ENCODE measurements at regions of chr20 and their contacts with region 1.

Region 1: DNA sequence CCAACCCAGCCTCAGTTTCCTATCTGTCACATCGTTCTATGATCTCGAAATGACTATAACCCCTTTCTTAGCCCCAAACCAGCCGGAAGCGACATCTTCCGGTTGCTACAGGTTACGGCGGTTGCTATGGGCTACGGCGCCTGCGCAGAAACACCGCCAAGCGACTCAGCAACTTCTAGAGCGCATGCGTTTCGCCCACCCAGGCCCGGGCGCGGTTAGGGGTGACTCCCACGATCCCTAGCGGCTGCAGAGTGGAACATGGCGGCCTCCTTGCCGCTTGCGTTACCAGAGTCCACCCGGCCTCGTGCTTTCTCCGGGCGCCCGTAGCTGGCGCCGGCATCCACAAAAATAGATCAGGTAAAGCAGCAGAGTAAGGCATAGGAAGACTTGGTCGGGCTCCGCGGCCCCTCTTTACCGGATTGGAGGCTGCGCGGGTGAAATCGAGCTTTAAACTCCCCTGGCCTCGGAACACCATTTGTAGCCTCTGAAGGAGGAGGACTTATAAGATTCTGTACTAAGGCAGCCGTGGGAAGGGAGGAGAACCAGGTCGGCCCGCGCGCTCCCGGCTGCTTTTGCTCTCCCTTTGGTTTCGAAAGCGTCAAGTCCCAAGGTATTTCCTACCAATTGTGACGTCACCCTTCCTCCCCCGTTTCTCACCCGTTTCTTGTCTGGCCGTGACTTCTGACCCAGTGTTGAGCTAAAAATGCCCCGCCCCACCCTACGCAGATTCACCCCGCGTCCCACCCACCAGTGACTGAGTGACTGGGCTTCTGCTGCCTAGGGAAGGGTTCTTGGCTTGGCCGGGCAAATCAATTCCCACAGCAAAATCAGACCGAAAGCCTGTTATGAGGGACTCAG is 3.5 kb downstream of the SDCBP2 start:
- DNase-seq: peak; percentile 96
- H3K4me3 ChIP-seq: peak overlapping the region; percentile 87 to 97
- H3K27ac ChIP-seq: peak overlapping the region; percentile 99 to 100
- H3K4me1 ChIP-seq: peaks cover 44% of the 10 kb centered on the region
- H3K27me3 ChIP-seq: no peaks in the 10 kb centered on the region
- CTCF ChIP-seq: peak; percentile 12 to 34 (median 31)
- POLR2A ChIP-seq: peak; percentile 77

Region 2: GRCh38 chr20:1392823-1393506 is 67.6 kb after region 1 on chr20 and contains the start of gene FKBP1A:
- intact Hi-C with region 1: loop called (anchors 5 kb)
- DNase-seq: peak; percentile 93
- H3K4me3 ChIP-seq: peak within 1 kb of the TSS; percentile 90 to 95
- H3K27ac ChIP-seq: peak within 1 kb of the TSS; percentile 73 to 86
- H3K4me1 ChIP-seq: peaks cover 35% of the 10 kb centered on the region
- H3K27me3 ChIP-seq: no peaks in the 10 kb centered on the region
- CTCF ChIP-seq: peak in 1 of 3 experiments; percentile 41
- POLR2A ChIP-seq: peak; percentile 39
- total RNA-seq, gene FKBP1A: 90.9 to 122 TPM

Measured in testis (tissue), 5 donors.